ENCODE measurements at regions of chr12 and their contacts with region 1.

Region 1: DNA sequence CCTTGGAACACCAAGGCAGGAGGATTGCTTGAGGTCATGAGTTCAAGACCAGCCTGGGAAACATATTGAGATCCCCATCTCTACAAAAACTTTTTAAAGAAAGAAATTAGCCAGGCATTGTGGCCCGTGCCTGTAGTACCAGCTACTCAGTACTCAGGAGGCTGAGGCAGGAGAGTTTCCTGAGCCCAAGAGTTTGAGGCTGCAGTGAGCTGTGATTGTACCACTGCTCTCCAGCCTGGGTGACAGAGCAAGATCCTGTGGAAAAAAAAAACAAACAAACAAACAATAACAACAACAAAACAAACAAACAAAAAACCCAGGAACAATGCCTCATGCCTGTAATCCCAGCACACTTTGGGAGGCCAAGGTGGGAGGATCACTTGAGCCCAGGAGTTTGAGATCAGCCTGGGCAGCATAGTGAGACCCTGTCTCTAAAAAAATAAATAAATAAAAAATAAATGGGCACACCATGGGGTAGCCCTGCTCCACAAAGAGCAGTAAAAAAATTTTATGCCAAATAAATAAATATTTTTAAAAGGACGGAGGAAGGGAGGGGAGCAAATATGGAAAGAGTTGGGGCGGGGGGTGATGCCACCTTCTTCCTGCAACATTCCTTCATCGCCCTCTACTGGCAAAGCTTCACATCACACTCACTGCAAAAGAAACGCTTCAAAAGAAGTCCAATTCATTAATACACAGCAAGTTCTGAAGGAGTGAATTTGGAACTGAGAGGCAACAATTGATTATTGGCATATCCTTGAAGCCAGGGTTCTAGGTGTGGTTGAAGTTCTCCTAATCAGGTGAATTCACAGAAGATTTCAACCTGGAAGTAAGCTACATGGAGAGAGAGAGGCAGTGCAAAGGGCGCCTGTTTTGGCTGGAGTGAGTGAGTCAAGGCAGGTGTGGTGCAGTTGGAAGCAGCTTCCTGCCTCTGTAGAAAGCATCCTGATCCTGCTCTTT is 8.8 kb upstream of the GNPTAB start:
- DNase-seq: peak; percentile 64 to 71 (median 67)
- H3K4me3 ChIP-seq: no peak overlapping the region
- H3K4me3 Mint-ChIP-seq: peak overlapping the region in 1 of 8 donors; percentile 10
- H3K27ac ChIP-seq: no peak overlapping the region
- H3K27ac Mint-ChIP-seq: peak overlapping the region in 3 of 7 donors; percentile 25 to 75 (median 30)
- H3K4me1 ChIP-seq: peaks cover 24% of the 10 kb centered on the region
- H3K4me1 Mint-ChIP-seq: peaks cover 7 to 16% (median 12%) of the 10 kb centered on the region in 4 donors
- H3K27me3 ChIP-seq: no peaks in the 10 kb centered on the region
- H3K27me3 Mint-ChIP-seq: no peaks in the 10 kb centered on the region

Region 2: DNA sequence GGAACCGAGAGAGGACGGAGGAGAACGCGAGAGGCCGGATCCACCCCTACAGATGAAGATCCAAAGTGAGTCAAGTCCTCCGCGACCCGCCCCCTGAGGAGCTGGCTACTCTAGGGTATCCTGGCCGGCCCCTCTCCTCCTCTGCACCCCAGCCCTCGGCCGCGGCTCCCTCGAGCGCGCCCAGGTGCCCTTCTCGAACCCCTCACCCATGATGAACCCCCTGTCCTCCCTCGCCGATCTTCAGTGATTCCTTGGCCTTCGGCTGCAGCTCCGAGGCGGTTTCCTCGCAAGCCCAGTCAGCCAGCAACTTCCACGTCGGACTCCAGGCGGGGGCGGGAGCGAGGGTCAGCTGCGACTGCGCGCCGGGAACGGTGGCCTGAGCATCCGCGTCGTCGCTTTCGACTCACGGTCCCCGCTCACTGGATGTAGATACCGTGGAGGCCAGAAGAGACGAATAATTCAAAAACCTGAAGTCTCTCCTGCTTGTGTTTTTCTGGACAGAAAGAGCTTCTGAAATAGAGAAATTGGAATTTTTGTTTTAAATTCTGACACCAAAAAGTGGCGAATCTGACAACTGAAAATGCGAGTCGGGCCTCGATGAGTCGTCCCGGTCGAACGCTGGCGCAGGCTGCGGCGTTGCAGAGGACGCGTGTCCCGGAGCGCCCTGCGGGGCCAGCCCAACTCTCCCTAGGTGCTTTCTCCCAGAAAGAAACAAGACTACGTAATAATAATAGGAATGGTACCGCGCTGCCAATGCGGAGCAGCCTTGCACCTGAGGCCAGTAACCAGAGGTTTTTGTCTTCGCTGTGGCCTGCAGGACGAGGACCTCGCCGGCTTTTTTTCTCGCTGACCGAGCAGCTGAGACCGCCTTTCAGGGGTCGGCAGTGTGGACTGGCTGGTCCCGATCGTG is 431.9 kb before region 1 on chr12 and contains the start of gene ARL1:
- CTCF ChIA-PET with region 1: interaction called, 12 read pairs
- POLR2A ChIA-PET with region 1: interaction called, 15 read pairs
- intact Hi-C with region 1: no loop called
- DNase-seq: peak; percentile 57 to 75 (median 68)
- H3K4me3 ChIP-seq: peak within 1 kb of the TSS; percentile 94 to 97
- H3K4me3 Mint-ChIP-seq: peak within 1 kb of the TSS; percentile 90 to 99 (median 96)
- H3K27ac ChIP-seq: peak within 1 kb of the TSS; percentile 71
- H3K27ac Mint-ChIP-seq: peak within 1 kb of the TSS; percentile 93 to 97 (median 96)
- H3K4me1 ChIP-seq: peaks cover 25% of the 10 kb centered on the region
- H3K4me1 Mint-ChIP-seq: peaks cover 16 to 40% (median 23%) of the 10 kb centered on the region in 4 donors
- H3K27me3 ChIP-seq: no peaks in the 10 kb centered on the region
- H3K27me3 Mint-ChIP-seq: no peaks in the 10 kb centered on the region
- total RNA-seq, gene ARL1: 37.9 to 41.0 TPM

Region 3: GRCh38 chr12:101670007-101670687 is 169.5 kb before region 1 on chr12:
- CTCF ChIA-PET with region 1: interaction called, 7 read pairs
- POLR2A ChIA-PET with region 1: no interaction called
- intact Hi-C with region 1: loop called (anchors 2 kb)
- DNase-seq: peak; percentile 37 to 67 (median 47)
- H3K4me3 ChIP-seq: no peak overlapping the region
- H3K4me3 Mint-ChIP-seq: peak overlapping the region in 1 of 8 donors; percentile 80
- H3K27ac ChIP-seq: no peak overlapping the region
- H3K27ac Mint-ChIP-seq: peak overlapping the region in 3 of 7 donors; percentile 4 to 66 (median 24)
- H3K4me1 ChIP-seq: peaks cover 21% of the 10 kb centered on the region
- H3K4me1 Mint-ChIP-seq: peaks cover 14 to 28% (median 21%) of the 10 kb centered on the region in 4 donors
- H3K27me3 ChIP-seq: no peaks in the 10 kb centered on the region
- H3K27me3 Mint-ChIP-seq: peaks cover 0 to 7% of the 10 kb centered on the region in 2 donors

Region 4: GRCh38 chr12:101686176-101686575 is 153.4 kb before region 1 on chr12:
- CTCF ChIA-PET with region 1: no interaction called
- POLR2A ChIA-PET with region 1: no interaction called
- intact Hi-C with region 1: no loop called
- DNase-seq: no peak
- H3K4me3 ChIP-seq: no peak overlapping the region
- H3K4me3 Mint-ChIP-seq: no peak overlapping the region
- H3K27ac ChIP-seq: no peak overlapping the region
- H3K27ac Mint-ChIP-seq: no peak overlapping the region
- H3K4me1 ChIP-seq: no peaks in the 10 kb centered on the region
- H3K4me1 Mint-ChIP-seq: no peaks in the 10 kb centered on the region
- H3K27me3 ChIP-seq: no peaks in the 10 kb centered on the region
- H3K27me3 Mint-ChIP-seq: peaks cover 4 to 6% of the 10 kb centered on the region in 2 donors

Region 5: DNA sequence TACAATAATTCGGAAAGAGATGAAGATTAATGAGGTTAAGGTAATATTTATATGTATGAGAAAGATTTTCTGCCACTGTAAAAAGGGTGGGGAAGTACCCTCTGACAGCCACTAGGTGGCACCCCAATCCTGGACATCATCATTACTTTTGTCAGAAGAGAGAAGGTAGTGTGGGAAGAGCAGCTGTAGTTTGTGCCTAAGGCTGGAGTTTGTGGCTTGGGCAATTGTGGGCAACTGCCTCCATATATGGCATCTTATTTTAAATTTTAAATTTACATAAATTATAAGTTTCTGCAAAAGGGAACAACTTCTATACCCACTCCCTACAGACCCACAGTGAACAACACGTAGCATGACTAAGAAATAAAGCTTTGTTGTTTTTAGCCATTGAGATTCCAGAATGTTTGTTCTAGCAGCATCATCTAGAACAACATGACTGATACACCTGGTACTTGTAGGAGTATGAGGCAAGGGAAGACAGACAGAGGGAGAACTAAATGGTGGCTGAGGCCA is 65.9 kb before region 1 on chr12:
- CTCF ChIA-PET with region 1: interaction called, 458 read pairs
- POLR2A ChIA-PET with region 1: interaction called, 21 read pairs
- intact Hi-C with region 1: loop called (anchors 1 kb)
- DNase-seq: peak; percentile 47 to 72 (median 69)
- H3K4me3 ChIP-seq: no peak overlapping the region
- H3K4me3 Mint-ChIP-seq: no peak overlapping the region
- H3K27ac ChIP-seq: no peak overlapping the region
- H3K27ac Mint-ChIP-seq: peak overlapping the region in 2 of 7 donors; percentile 3 to 69
- H3K4me1 ChIP-seq: no peaks in the 10 kb centered on the region
- H3K4me1 Mint-ChIP-seq: peaks cover 0 to 4% (median 2%) of the 10 kb centered on the region in 4 donors
- H3K27me3 ChIP-seq: no peaks in the 10 kb centered on the region
- H3K27me3 Mint-ChIP-seq: no peaks in the 10 kb centered on the region

Region 6: DNA sequence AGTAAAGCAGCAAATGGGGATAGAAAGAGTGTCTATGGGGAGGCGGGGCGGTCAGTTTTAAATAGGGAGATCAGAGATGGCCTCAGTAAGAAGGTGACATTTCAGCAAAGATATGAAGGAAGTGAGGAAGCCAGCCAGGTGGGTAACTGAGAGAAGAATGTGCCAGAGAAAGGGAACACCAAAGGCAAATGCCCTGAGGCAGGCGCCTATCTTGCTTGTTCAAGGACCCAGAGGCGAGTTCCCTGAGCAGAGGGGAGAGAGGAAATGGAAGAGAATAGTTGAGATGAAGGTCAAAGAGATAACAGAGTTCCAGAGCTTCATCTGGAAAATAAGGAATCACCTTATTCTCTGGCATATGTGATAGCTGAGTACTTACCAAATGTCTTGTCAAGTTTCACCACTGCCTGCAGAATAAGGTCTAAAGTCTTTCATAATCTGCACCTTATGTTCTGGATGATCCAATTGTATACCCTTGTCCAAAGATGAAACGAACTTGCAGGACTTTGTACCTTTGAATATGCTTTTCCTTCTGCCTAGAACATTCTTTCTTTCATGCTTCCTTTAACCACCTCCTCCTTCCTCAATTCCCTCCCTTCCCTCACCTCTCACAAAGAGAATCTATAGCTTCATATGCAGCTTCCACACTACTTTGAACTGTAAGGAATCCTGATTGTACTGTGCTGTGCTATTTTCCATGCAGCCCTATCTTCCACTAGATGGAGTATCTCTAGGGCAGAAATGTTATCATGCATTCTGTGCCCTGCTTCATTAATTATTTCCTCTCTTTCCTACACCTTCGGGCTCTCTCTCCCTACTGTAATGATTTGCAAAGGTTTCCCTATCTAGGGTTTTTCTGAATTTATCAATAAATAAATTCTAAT is 47.3 kb before region 1 on chr12:
- CTCF ChIA-PET with region 1: interaction called, 41 read pairs
- POLR2A ChIA-PET with region 1: no interaction called
- intact Hi-C with region 1: no loop called
- DNase-seq: peak in 1 of 5 donors; percentile 6
- H3K4me3 ChIP-seq: no peak overlapping the region
- H3K4me3 Mint-ChIP-seq: no peak overlapping the region
- H3K27ac ChIP-seq: no peak overlapping the region
- H3K27ac Mint-ChIP-seq: peak overlapping the region in 5 of 7 donors; percentile 18 to 77 (median 47)
- H3K4me1 ChIP-seq: peaks cover 5% of the 10 kb centered on the region
- H3K4me1 Mint-ChIP-seq: peaks cover 5 to 13% (median 10%) of the 10 kb centered on the region in 4 donors
- H3K27me3 ChIP-seq: no peaks in the 10 kb centered on the region
- H3K27me3 Mint-ChIP-seq: no peaks in the 10 kb centered on the region

Region 7: DNA sequence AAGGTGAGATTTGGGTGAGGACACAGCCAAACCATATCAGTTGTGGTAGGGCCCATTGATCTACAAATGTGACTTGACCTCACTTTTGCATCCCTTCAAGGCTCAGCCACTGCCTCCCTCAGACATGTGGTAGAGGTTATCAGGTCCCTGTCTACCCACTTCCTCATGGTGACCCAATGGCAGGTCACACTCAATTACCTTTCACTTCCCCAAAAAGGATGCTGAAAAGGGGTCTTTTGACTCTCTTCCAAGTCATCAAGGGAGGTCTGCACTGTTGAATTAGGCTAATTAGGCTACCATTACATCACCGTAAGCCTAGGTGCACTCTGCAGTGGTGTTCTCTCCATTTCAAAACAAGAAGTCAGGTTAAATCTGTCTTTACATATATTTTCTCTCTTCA is 15.1 kb after region 1 on chr12:
- CTCF ChIA-PET with region 1: interaction called, 25 read pairs
- POLR2A ChIA-PET with region 1: no interaction called
- intact Hi-C with region 1: no loop called
- DNase-seq: no peak
- H3K4me3 ChIP-seq: no peak overlapping the region
- H3K4me3 Mint-ChIP-seq: no peak overlapping the region
- H3K27ac ChIP-seq: no peak overlapping the region
- H3K27ac Mint-ChIP-seq: no peak overlapping the region
- H3K4me1 ChIP-seq: no peaks in the 10 kb centered on the region
- H3K4me1 Mint-ChIP-seq: no peaks in the 10 kb centered on the region
- H3K27me3 ChIP-seq: no peaks in the 10 kb centered on the region
- H3K27me3 Mint-ChIP-seq: no peaks in the 10 kb centered on the region

Measured in CD4-positive, alpha-beta memory T cell (primary cell).